AG04449 (cell line): ENCODE measurements at regions of chr6 and their contacts with region 1.

Region 1: GRCh38 chr6:125114248-125114858 is 39.2 kb upstream of the TPD52L1 start:
- DNase-seq: no peak
- H3K4me3 ChIP-seq: no peak overlapping the region
- CTCF ChIP-seq: peak; percentile 53

Region 2: GRCh38 chr6:124881898-124882579 is 232.3 kb before region 1 on chr6:
- CTCF ChIA-PET with region 1: interaction called, 27 read pairs
- POLR2A ChIA-PET with region 1: no interaction called
- DNase-seq: no peak
- H3K4me3 ChIP-seq: no peak overlapping the region
- CTCF ChIP-seq: no peak

Region 3: GRCh38 chr6:124924333-124924759 is 190.0 kb before region 1 on chr6:
- CTCF ChIA-PET with region 1: interaction called, 13 read pairs
- POLR2A ChIA-PET with region 1: no interaction called
- DNase-seq: no peak
- H3K4me3 ChIP-seq: no peak overlapping the region
- CTCF ChIP-seq: no peak

Region 4: DNA sequence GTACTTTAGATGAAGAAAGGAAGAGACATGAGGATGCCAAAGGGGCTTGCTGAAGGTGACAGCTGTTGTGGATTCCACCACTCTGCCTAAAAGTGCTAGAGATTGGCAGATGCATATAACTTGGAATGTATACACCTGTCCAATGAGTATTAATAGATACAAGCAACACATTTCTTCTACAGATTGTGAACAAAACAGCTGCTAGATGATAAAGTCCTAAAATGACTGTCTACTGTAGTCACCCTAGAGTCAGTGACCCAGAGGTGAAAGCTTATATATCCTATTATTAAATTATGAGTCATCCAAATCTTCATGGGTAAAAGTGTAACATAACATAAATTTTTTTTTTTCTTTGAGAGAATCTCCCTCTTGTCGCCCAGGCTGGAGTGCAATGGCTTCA is 146.9 kb before region 1 on chr6:
- CTCF ChIA-PET with region 1: interaction called, 22 read pairs
- POLR2A ChIA-PET with region 1: no interaction called
- DNase-seq: no peak
- H3K4me3 ChIP-seq: no peak overlapping the region
- CTCF ChIP-seq: no peak

Region 5: DNA sequence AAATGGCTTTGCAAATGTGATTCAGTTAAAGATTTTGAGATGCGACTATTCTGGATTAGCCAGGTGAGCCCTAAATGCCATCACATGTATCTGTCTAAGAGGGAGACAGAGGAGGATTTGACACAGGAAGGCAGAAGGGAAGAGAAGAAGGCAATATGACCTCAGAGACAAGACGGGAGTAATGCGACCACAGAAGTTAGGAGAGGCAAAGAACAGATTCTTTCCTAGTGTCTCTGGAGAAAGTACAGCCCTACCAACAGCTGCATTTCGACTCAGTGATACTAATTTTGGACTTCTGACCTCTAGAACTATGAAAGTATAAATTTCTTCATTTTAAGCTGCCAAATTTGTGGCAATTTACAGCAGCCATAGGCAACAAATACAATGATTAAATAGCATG is 15.0 kb after region 1 on chr6:
- CTCF ChIA-PET with region 1: interaction called, 59 read pairs
- POLR2A ChIA-PET with region 1: no interaction called
- DNase-seq: no peak
- H3K4me3 ChIP-seq: no peak overlapping the region
- CTCF ChIP-seq: no peak